ENCODE measurements at regions of chr11 and their contacts with region 1.

Region 1: GRCh38 chr11:45017329-45017728 is 66.6 kb upstream of the TP53I11 start:
- DNase-seq: peak; percentile 10 to 65
- H3K4me3 ChIP-seq: no peak overlapping the region
- H3K27ac ChIP-seq: no peak overlapping the region
- H3K4me1 ChIP-seq: peaks cover 5 to 15% (median 12%) of the 10 kb centered on the region in 4 experiments; a peak in 6 of 7 replicates
- H3K27me3 ChIP-seq: no peaks in the 10 kb centered on the region
- CTCF ChIP-seq: peak; percentile 74 to 87 (median 85)
- EP300 ChIP-seq: no peak
- POLR2A ChIP-seq: no peak
- RAD21 ChIP-seq: peak; percentile 56 to 74

Region 2: GRCh38 chr11:44842220-44842619 is 175.1 kb before region 1 on chr11:
- CTCF ChIA-PET with region 1: no interaction called
- POLR2A ChIA-PET with region 1: no interaction called
- DNase-seq: no peak
- H3K4me3 ChIP-seq: no peak overlapping the region
- H3K27ac ChIP-seq: no peak overlapping the region
- H3K4me1 ChIP-seq: peaks cover 0 to 16% (median 6%) of the 10 kb centered on the region in 4 experiments; a peak in 5 of 7 replicates
- H3K27me3 ChIP-seq: peaks cover 0 to 2% (median 0%) of the 10 kb centered on the region in 4 experiments; a peak in 1 of 7 replicates
- CTCF ChIP-seq: no peak
- EP300 ChIP-seq: no peak
- POLR2A ChIP-seq: no peak
- RAD21 ChIP-seq: no peak

Region 3: DNA sequence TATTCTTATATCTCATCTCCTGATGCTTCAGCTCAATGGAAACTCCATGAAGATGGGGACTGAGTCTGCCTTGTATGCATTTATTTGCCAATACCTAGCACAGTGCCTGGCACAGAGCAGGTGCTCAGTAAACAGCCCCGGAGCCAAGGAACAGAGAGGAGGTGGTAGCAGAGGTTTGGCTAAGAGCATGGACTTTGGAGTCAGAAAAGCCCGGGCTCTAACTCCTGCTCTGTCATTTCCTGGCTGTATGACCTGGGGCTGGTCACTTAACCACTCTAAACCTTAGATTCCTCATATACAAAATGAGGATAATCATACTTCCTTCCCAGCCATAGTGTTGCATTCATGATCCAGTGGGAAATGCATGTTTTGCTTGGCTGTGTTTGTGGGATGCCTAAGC is 103.2 kb before region 1 on chr11:
- CTCF ChIA-PET with region 1: no interaction called
- POLR2A ChIA-PET with region 1: no interaction called
- DNase-seq: no peak
- H3K4me3 ChIP-seq: no peak overlapping the region
- H3K27ac ChIP-seq: no peak overlapping the region
- H3K4me1 ChIP-seq: peaks cover 0 to 29% (median 6%) of the 10 kb centered on the region in 4 experiments; a peak in 6 of 7 replicates
- H3K27me3 ChIP-seq: no peaks in the 10 kb centered on the region; a peak in 2 of 7 replicates
- CTCF ChIP-seq: no peak
- EP300 ChIP-seq: no peak
- POLR2A ChIP-seq: no peak
- RAD21 ChIP-seq: no peak

Region 4: DNA sequence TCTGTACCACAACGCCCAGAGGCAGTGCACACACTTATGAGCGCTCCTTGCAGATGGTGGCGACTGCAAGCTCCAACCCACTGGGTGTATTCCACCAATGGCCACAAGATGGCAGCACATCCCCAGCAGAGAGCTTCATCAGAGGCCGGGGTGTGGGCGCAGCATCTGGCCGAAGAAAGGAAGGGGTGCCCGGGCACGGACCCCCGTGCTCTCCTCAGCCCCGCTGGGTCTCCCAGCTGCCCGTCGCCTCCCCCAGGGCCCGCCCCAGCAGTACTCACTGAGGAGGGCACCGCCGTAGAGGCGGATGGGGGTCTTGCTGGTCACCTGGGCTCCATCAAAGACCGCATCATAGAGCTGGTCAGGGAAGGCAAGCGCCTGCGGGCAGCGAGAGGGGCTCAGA is 80.8 kb before region 1 on chr11:
- CTCF ChIA-PET with region 1: interaction called, 56 read pairs
- POLR2A ChIA-PET with region 1: no interaction called
- DNase-seq: peak; percentile 64 to 98
- H3K4me3 ChIP-seq: 0 out of 8 replicates have a peak overlapping the region, but pooled peaks of 1 of the 4 experiments have one; percentile 18
- H3K27ac ChIP-seq: no peak overlapping the region
- H3K4me1 ChIP-seq: peaks cover 0 to 11% (median 7%) of the 10 kb centered on the region in 4 experiments; a peak in 6 of 7 replicates
- H3K27me3 ChIP-seq: no peaks in the 10 kb centered on the region
- CTCF ChIP-seq: peak in 2 of 3 experiments; percentile 91 to 98; a peak in 3 of 4 replicates
- EP300 ChIP-seq: no peak
- POLR2A ChIP-seq: no peak
- RAD21 ChIP-seq: peak; percentile 98 to 99

Region 5: GRCh38 chr11:44964526-44965209 is 52.7 kb before region 1 on chr11:
- CTCF ChIA-PET with region 1: interaction called, 10 read pairs
- POLR2A ChIA-PET with region 1: interaction called, 4 read pairs
- DNase-seq: no peak
- H3K4me3 ChIP-seq: no peak overlapping the region
- H3K27ac ChIP-seq: no peak overlapping the region
- H3K4me1 ChIP-seq: peaks cover 13 to 44% (median 28%) of the 10 kb centered on the region in 4 experiments
- H3K27me3 ChIP-seq: no peaks in the 10 kb centered on the region; a peak in 2 of 7 replicates
- CTCF ChIP-seq: no peak
- EP300 ChIP-seq: no peak
- POLR2A ChIP-seq: no peak
- RAD21 ChIP-seq: no peak; a peak in 1 of 4 replicates

Region 6: GRCh38 chr11:44993971-44994704 is 23.2 kb before region 1 on chr11:
- CTCF ChIA-PET with region 1: interaction called, 25 read pairs
- POLR2A ChIA-PET with region 1: no interaction called
- DNase-seq: peak in 1 of 2 experiments; percentile 39
- H3K4me3 ChIP-seq: no peak overlapping the region
- H3K27ac ChIP-seq: no peak overlapping the region
- H3K4me1 ChIP-seq: no peaks in the 10 kb centered on the region
- H3K27me3 ChIP-seq: no peaks in the 10 kb centered on the region
- CTCF ChIP-seq: no peak
- EP300 ChIP-seq: no peak
- POLR2A ChIP-seq: no peak
- RAD21 ChIP-seq: no peak

Region 7: GRCh38 chr11:45037434-45038005 is 20.2 kb after region 1 on chr11:
- CTCF ChIA-PET with region 1: interaction called, 16 read pairs
- POLR2A ChIA-PET with region 1: no interaction called
- DNase-seq: no peak
- H3K4me3 ChIP-seq: no peak overlapping the region
- H3K27ac ChIP-seq: no peak overlapping the region
- H3K4me1 ChIP-seq: no peaks in the 10 kb centered on the region
- H3K27me3 ChIP-seq: no peaks in the 10 kb centered on the region; a peak in 1 of 7 replicates
- CTCF ChIP-seq: no peak
- EP300 ChIP-seq: no peak
- POLR2A ChIP-seq: no peak
- RAD21 ChIP-seq: no peak

Region 8: DNA sequence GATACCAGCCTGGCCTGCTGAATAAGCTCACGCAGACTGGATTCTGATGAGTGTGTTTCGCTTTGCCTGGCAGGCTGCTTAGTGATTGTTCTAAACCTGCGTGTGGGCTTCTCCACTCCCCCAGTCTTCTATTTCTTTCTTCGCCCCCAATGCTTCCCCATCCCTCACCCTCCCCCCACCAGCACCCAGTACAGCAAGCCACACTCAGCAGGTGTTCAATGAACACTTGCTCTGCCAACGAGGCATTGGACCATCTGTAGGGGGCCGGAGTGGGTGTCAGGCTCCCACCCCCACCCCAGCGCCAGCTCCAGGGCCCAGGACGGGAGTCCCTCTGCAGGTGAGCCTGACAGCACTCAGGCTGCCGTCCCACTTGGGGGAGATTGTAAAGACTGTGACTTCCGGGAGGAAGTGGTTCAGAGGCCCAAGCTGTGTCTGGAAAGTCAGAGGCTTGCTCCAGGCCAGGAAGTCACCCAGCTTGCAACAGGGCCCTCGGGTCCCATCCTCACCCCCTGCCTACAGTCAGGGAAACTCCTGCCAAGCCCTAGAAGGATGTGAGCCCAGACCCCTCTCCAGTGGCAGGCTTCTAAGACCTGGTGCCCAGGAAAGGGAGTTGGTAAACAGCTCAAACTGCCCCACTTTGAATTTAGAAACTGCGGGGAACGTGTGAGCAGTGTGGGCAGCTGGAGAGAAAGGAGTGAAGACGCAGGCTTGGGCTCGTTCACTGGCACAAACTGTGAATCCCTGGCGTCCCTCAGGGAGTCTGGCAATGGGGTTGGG is 62.8 kb after region 1 on chr11:
- CTCF ChIA-PET with region 1: interaction called, 10 read pairs
- POLR2A ChIA-PET with region 1: no interaction called
- DNase-seq: no peak
- H3K4me3 ChIP-seq: no peak overlapping the region
- H3K27ac ChIP-seq: no peak overlapping the region
- H3K4me1 ChIP-seq: peaks cover 11 to 35% (median 12%) of the 10 kb centered on the region in 4 experiments
- H3K27me3 ChIP-seq: no peaks in the 10 kb centered on the region
- CTCF ChIP-seq: no peak
- EP300 ChIP-seq: no peak
- POLR2A ChIP-seq: no peak
- RAD21 ChIP-seq: no peak

Measured in H1 (cell line).